GM13976 (cell line): ENCODE measurements at regions of chr1 and their contacts with region 1.

Region 1: DNA sequence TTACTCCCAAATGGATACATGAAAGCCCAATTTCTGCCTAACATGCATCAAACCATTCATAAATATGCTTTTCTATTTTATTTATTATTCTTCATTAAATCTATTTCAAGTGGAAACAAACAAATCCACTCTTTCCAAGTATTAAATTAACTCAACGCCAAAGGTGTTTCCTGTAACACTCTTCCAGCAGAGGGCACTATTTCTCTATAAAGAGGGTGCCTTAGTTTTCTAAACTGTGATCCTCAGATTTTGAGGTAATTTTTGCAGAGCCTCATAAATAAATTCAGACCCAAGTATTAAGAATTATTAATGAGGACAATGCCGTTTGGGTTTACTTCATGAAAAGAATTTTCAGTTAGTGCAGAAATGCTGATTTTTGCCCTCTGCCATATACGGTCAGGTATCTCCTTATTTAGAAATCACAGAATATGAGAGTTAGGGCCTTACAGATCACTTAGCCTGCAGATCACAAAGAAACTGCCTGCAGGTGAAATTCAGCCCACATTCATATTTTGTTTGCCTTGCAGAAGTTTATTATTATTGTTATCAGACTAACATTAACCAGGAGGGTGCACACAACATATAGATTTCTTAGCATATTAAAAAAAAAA is 40.1 kb upstream of the MYSM1 start:
- DNase-seq: peak; percentile 69
- CTCF ChIP-seq: peak; percentile 46

Region 2: GRCh38 chr1:58206749-58207148 is 533.2 kb before region 1 on chr1:
- in situ Hi-C with region 1: no loop called
- DNase-seq: no peak
- CTCF ChIP-seq: no peak

Region 3: DNA sequence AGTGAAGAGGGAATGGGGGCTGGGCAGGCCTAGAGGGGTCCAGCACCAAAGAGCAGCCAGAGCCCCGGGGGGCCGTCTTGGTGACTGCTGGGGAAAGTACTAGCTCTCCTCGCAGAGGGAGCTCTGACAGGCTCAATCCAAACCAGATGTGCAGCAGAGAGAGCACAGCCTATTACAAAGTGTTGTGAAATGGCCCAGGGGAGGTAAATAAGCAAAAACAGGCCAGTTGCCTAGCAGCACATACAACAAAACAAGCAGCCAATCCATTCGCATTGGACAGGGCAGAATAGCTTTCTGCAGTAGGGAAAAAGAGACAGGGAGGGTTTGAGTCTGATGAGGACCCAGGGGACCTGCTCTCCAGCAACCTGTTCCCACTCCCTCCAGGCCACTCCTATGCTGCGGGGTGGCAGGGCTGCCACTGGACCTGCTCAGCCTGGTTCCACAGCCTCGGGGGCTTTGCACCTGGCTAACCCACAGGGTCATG is 317.3 kb after region 1 on chr1:
- in situ Hi-C with region 1: no loop called
- DNase-seq: no peak
- CTCF ChIP-seq: no peak

Region 4: DNA sequence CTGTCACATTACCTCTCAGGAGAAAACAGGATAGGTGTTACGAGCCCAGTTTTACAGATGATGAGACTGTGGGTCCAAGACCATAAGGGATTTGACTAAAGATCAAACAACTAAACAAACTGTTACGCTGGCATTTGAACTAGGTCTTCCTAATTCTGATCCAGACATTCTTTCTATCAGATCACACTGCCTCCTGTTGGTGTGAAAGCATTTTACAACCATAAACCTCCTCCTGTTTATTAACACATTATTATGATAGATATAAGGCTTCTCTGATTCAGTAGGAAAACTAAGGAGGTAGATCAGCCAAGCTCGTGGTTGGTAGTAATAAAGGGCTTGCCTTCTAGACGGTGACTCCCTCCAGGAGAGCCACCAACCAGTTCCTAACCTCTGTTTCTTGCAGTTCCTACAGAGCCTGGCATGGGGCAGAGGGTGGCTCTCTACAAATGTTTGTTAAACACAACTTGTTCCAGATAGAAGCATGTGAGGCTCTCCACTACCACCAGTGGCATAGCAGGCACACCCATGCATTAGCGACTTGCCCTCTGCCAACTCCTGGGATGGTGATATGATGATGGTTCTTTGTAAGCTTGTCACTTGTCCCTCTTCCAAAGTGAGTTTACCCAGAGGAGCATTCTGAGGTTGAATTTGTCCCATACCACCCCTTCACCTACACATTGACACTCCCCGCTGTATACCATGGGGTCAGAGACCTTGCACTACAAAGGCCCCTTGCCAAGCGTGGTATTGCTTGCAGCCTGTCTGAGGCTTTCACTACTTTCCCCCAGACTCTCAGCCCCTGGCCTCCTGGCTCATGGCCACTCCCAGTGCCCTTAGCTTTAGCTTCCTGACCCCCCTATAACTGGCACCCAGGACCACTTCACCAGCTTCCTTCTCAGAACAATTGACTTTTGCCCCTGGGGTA is 978.4 kb after region 1 on chr1:
- in situ Hi-C with region 1: loop called (anchors 10 kb)
- DNase-seq: no peak
- CTCF ChIP-seq: peak; percentile 14

Region 5: DNA sequence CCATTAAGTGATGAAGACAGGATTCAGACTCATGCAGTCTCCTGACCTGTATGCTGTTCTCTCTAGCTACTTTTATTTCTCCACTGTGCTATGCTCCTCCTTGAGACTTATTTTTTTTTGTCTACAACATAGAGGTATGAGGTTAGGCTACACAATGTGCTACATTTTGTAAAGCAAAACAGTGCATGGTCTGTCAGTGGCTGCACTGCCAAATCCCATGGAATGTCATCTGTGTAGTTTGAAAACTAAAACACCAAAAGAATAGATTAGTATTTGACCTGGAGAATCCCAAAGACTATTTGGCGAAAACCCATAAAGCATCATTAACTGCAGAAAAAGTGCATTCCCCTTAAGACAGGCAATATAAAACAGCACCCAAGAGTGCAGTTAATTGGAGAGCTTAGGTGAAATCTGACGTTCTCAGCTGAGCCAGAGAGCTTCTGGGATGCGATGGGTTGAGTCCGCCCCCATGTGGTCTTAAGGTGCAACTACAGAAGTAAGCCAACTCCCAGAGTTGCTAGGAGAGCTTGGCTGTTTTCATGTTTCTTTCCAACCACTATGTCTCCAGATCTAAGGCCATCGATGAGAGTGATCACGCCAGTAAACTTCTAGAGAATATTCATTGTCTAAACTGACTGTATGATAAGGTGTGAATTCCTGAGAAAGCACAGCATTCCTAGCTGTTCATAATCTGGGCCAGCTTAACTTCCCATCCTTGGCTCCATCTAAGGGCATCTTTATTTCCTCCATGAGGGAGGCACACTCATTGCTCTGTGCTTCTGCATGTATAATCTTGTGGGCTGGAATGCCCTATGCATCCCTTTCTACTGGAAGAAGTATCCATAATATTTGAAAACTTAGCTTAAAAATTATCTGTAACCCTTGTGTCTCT is 1207.3 kb after region 1 on chr1:
- in situ Hi-C with region 1: loop called (anchors 25 kb)
- DNase-seq: peak; percentile 50
- CTCF ChIP-seq: peak; percentile 77